ENCODE measurements at regions of chr12 and their contacts with region 1.

Region 1: DNA sequence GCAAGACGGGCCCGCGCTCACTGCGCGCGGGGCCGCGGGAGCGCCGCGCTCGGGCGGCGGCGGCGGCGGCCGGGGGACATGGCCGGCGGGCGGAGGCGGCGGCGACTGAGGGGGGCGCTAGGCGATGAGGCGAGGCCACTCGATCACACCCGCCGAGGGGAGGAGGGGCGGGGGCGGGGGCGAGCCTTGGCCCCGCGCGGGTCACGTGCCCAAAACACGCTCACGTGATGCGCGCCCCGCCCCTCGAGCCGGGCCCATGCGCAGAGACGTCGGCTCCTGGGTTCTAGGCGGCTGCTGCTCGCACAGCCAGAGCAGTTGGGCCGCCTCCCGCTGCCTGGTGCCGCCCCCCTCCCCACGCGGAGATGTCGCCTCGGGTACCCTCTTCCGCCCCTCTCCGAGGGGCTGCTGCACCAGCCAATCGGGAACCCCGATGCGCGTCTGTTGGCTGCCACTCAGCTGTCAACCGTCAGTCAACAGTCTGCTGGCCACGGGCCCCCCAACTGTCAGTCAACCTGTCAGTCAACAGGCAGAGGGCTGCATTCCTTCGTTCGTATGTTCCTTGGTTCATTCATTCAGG is at the start of gene SPPL3:
- DNase-seq: peak; percentile 80 to 96 (median 91)
- ATAC-seq: peak; percentile 77
- H3K4me3 ChIP-seq: peak within 1 kb of the TSS; percentile 84
- H3K4me3 Mint-ChIP-seq: peak within 1 kb of the TSS; percentile 99
- H3K27ac ChIP-seq: peak within 1 kb of the TSS; percentile 68 to 72
- H3K27ac Mint-ChIP-seq: peak within 1 kb of the TSS; percentile 93
- H3K4me1 ChIP-seq: peaks cover 30% of the 10 kb centered on the region
- H3K4me1 Mint-ChIP-seq: peaks cover 37% of the 10 kb centered on the region
- H3K27me3 ChIP-seq: no peaks in the 10 kb centered on the region
- H3K27me3 Mint-ChIP-seq: no peaks in the 10 kb centered on the region
- CTCF ChIP-seq: no peak
- total RNA-seq, gene SPPL3: 38.3 to 43.4 TPM

Region 2: DNA sequence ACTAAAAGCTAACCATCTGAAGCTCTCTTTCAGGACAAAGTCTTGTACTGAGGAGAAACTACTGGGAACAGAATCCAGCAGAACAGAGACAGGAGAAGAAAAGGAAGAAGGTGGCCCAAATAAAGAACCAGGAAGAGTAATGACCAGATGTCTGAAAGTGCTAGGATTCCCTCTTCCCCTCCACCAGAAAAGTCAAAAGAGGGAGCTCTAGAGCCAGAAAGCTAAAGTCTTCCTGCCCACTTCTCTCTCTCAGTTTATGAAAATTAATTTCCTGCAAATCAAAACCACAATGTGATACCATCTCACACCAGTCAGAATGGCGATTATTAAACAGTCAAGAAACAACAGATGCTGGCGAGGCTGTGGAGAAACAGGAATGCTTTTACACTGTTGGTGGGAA is 47.3 kb before region 1 on chr12:
- CTCF ChIA-PET with region 1: no interaction called
- POLR2A ChIA-PET with region 1: interaction called, 4 read pairs
- intact Hi-C with region 1: loop called in 1 of 2 experiments (anchors 5 kb)
- DNase-seq: peak in 3 of 14 experiments; percentile 39 to 42 (median 40)
- ATAC-seq: peak; percentile 17
- H3K4me3 ChIP-seq: no peak overlapping the region
- H3K4me3 Mint-ChIP-seq: peak overlapping the region; percentile 8
- H3K27ac ChIP-seq: no peak overlapping the region
- H3K27ac Mint-ChIP-seq: peak overlapping the region; percentile 55
- H3K4me1 ChIP-seq: peaks cover 31% of the 10 kb centered on the region
- H3K4me1 Mint-ChIP-seq: peaks cover 68% of the 10 kb centered on the region
- H3K27me3 ChIP-seq: no peaks in the 10 kb centered on the region
- H3K27me3 Mint-ChIP-seq: no peaks in the 10 kb centered on the region
- CTCF ChIP-seq: peak; percentile 55

Region 3: GRCh38 chr12:120886199-120887018 is 17.9 kb before region 1 on chr12:
- CTCF ChIA-PET with region 1: interaction called, 5 read pairs
- POLR2A ChIA-PET with region 1: interaction called, 14 read pairs
- intact Hi-C with region 1: no loop called
- DNase-seq: peak in 1 of 14 experiments; percentile 45
- ATAC-seq: peak; percentile 77
- H3K4me3 ChIP-seq: no peak overlapping the region
- H3K4me3 Mint-ChIP-seq: peak overlapping the region; percentile 9
- H3K27ac ChIP-seq: no peak overlapping the region
- H3K27ac Mint-ChIP-seq: peak overlapping the region; percentile 47
- H3K4me1 ChIP-seq: peaks cover 30% of the 10 kb centered on the region
- H3K4me1 Mint-ChIP-seq: peaks cover 74% of the 10 kb centered on the region
- H3K27me3 ChIP-seq: no peaks in the 10 kb centered on the region
- H3K27me3 Mint-ChIP-seq: no peaks in the 10 kb centered on the region
- CTCF ChIP-seq: no peak

Measured in CD4-positive, alpha-beta T cell (primary cell).